ENCODE measurements at regions of chr2 and their contacts with region 1.

Region 1: GRCh38 chr2:226423498-226423960 is 376.1 kb downstream of the IRS1 start:
- DNase-seq: peak; percentile 51
- ATAC-seq: no peak
- H3K4me3 ChIP-seq: no peak overlapping the region
- H3K27ac ChIP-seq: peak overlapping the region; percentile 80
- H3K4me1 ChIP-seq: peaks cover 24% of the 10 kb centered on the region
- H3K27me3 ChIP-seq: no peaks in the 10 kb centered on the region
- CTCF ChIP-seq: no peak
- POLR2A ChIP-seq: no peak
- RAD21 ChIP-seq: no peak

Region 2: GRCh38 chr2:225630824-225631533 is 792.5 kb before region 1 on chr2:
- CTCF ChIA-PET with region 1: no interaction called
- POLR2A ChIA-PET with region 1: no interaction called
- dilution Hi-C with region 1: no loop called
- in situ Hi-C with region 1: no loop called
- intact Hi-C with region 1: no loop called
- DNase-seq: no peak
- ATAC-seq: no peak
- H3K4me3 ChIP-seq: no peak overlapping the region
- H3K27ac ChIP-seq: no peak overlapping the region
- H3K4me1 ChIP-seq: no peaks in the 10 kb centered on the region
- H3K27me3 ChIP-seq: peaks cover 5% of the 10 kb centered on the region
- CTCF ChIP-seq: no peak
- POLR2A ChIP-seq: no peak
- RAD21 ChIP-seq: no peak

Region 3: DNA sequence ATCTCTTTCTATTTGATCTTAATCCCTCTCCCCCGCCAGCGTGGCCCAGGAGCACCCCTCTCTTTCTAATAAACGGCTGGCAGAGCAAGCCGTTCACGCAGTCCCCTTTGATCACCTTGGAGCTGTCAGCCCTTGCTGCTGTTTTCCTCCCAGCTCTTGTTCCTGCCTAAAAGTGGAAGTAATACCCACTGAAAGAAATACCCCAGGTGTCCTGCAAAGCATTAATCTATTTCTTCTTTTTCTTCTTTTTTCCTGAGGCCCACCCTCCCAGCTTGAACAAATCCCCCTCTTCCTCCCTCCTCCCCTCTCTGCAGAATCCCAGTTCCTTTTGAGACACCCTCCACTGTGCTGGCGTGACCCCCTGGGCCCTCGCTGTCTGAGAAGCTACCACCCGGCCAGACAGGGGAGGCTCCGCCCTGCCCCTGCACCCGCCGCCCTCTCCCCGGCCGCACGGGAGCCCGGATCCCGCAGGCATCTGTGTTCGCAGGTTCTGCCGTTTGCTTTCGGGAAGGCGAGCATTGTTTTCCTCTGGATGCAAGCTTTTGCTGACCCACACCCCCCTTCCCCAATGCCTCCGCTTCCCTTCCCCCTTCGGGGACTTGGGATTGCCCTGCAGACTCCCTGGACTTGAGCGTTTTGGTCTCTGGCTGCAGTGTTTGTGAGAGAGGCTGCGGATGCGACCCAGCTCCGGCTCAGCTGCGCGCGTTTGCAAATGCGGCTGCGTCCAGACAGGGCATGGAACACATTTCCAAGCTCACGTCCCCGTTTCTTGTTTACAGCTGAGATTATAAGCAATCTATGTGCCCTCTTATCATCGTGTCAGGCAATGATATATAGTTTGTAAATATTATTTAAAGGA is 392.5 kb before region 1 on chr2:
- CTCF ChIA-PET with region 1: no interaction called
- POLR2A ChIA-PET with region 1: no interaction called
- dilution Hi-C with region 1: no loop called
- in situ Hi-C with region 1: no loop called
- intact Hi-C with region 1: loop called (anchors 2 kb)
- DNase-seq: peak; percentile 69
- ATAC-seq: peak; percentile 92
- H3K4me3 ChIP-seq: peak overlapping the region; percentile 52
- H3K27ac ChIP-seq: peak overlapping the region; percentile 89
- H3K4me1 ChIP-seq: peaks cover 6% of the 10 kb centered on the region
- H3K27me3 ChIP-seq: no peaks in the 10 kb centered on the region
- CTCF ChIP-seq: no peak
- POLR2A ChIP-seq: no peak
- RAD21 ChIP-seq: peak; percentile 33

Region 4: DNA sequence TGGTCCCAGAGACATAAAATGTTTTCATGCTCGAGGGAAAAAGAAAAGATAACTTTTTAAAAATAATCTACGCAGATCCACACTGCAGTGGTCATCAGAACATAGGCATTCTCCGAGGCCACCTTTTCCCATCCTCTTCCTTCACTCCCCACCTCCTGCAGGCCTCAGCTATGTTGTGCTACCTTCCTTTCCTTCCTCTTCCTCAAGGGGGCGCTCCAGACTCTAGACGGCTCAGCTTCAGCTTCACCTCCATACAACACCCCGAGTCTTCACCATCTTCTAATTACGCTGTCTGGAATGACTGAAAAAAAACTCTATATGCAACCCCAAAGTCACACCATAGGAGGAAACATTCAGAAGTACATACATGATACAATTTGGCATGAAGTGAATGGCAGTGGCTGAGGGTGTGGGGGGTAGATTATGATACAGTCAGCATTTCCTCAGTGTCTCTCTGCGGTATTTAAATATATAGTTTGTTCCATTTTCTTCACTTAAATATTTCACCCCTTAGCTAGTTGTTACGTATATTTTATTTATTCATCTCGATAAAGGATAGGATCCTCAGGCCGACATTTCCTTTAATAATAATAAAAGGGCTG is 207.5 kb before region 1 on chr2:
- CTCF ChIA-PET with region 1: no interaction called
- POLR2A ChIA-PET with region 1: no interaction called
- dilution Hi-C with region 1: no loop called
- in situ Hi-C with region 1: no loop called
- intact Hi-C with region 1: loop called (anchors 10 kb)
- DNase-seq: peak; percentile 54
- ATAC-seq: peak; percentile 64
- H3K4me3 ChIP-seq: no peak overlapping the region
- H3K27ac ChIP-seq: no peak overlapping the region
- H3K4me1 ChIP-seq: peaks cover 8% of the 10 kb centered on the region
- H3K27me3 ChIP-seq: no peaks in the 10 kb centered on the region
- CTCF ChIP-seq: peak; percentile 68
- POLR2A ChIP-seq: no peak
- RAD21 ChIP-seq: peak; percentile 74

Region 5: GRCh38 chr2:226514939-226515338 is 91.4 kb after region 1 on chr2:
- CTCF ChIA-PET with region 1: no interaction called
- POLR2A ChIA-PET with region 1: no interaction called
- dilution Hi-C with region 1: no loop called
- in situ Hi-C with region 1: no loop called
- intact Hi-C with region 1: loop called (anchors 5 kb)
- DNase-seq: peak; percentile 40
- ATAC-seq: peak; percentile 52
- H3K4me3 ChIP-seq: no peak overlapping the region
- H3K27ac ChIP-seq: peak overlapping the region; percentile 24; the same call in 1 of the 2 replicates
- H3K4me1 ChIP-seq: peaks cover 4% of the 10 kb centered on the region
- H3K27me3 ChIP-seq: no peaks in the 10 kb centered on the region
- CTCF ChIP-seq: no peak
- POLR2A ChIP-seq: no peak
- RAD21 ChIP-seq: no peak

Region 6: GRCh38 chr2:226733189-226733858 is 309.8 kb after region 1 on chr2:
- CTCF ChIA-PET with region 1: no interaction called
- POLR2A ChIA-PET with region 1: no interaction called
- dilution Hi-C with region 1: no loop called
- in situ Hi-C with region 1: no loop called
- intact Hi-C with region 1: loop called (anchors 2 kb)
- DNase-seq: no peak
- ATAC-seq: no peak
- H3K4me3 ChIP-seq: no peak overlapping the region
- H3K27ac ChIP-seq: no peak overlapping the region
- H3K4me1 ChIP-seq: peaks cover 9% of the 10 kb centered on the region
- H3K27me3 ChIP-seq: no peaks in the 10 kb centered on the region
- CTCF ChIP-seq: no peak
- POLR2A ChIP-seq: no peak
- RAD21 ChIP-seq: no peak

Measured in IMR-90 (cell line).